Panc1 (cell line): ENCODE measurements at regions of chr19 and their contacts with region 1.

Region 1: GRCh38 chr19:54851353-54851752 is 1.1 kb downstream of the KIR3DL2 start:
- DNase-seq: no peak
- ATAC-seq: no peak
- H3K4me3 ChIP-seq: no peak overlapping the region
- H3K27ac ChIP-seq: no peak overlapping the region
- H3K4me1 ChIP-seq: no peaks in the 10 kb centered on the region
- H3K27me3 ChIP-seq: peaks cover 9% of the 10 kb centered on the region
- CTCF ChIP-seq: no peak

Region 2: GRCh38 chr19:54740134-54740497 is 111.2 kb before region 1 on chr19:
- CTCF ChIA-PET with region 1: no interaction called
- POLR2A ChIA-PET with region 1: no interaction called
- in situ Hi-C with region 1: no loop called
- intact Hi-C with region 1: loop called (anchors 5 kb)
- DNase-seq: no peak
- ATAC-seq: no peak
- H3K4me3 ChIP-seq: no peak overlapping the region
- H3K27ac ChIP-seq: no peak overlapping the region
- H3K4me1 ChIP-seq: no peaks in the 10 kb centered on the region
- H3K27me3 ChIP-seq: no peaks in the 10 kb centered on the region
- CTCF ChIP-seq: no peak

Region 3: DNA sequence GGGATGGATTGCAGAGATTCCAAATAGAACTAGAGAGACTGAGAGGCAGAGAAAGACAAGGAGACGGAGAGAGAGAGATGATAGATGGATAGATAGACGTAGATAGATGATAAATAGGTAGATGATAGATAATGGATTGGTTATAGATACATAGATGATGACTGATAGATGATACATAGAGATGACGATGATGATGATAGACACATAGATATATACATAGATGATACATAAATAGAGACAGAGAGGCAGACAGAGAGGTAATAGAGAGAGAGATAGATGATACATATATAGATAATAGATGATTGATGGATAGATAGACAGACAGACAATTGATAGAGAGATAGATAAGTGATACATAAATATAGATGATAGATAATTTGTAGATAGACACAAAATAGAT is 30.5 kb before region 1 on chr19:
- CTCF ChIA-PET with region 1: no interaction called
- POLR2A ChIA-PET with region 1: no interaction called
- in situ Hi-C with region 1: no loop called
- intact Hi-C with region 1: loop called (anchors 1 kb)
- DNase-seq: no peak
- ATAC-seq: no peak
- H3K4me3 ChIP-seq: no peak overlapping the region
- H3K27ac ChIP-seq: no peak overlapping the region
- H3K4me1 ChIP-seq: no peaks in the 10 kb centered on the region
- H3K27me3 ChIP-seq: peaks cover 2% of the 10 kb centered on the region; the same call in 1 of the 2 replicates
- CTCF ChIP-seq: no peak